ENCODE measurements at regions of chr10 and their contacts with region 1.

Region 1: GRCh38 chr10:117569610-117570390 is 27.3 kb downstream of the EMX2 start:
- DNase-seq: no peak
- ATAC-seq: no peak

Region 2: GRCh38 chr10:117454502-117454901 is 115.3 kb before region 1 on chr10:
- intact Hi-C with region 1: no loop called
- DNase-seq: no peak
- ATAC-seq: no peak

Region 3: DNA sequence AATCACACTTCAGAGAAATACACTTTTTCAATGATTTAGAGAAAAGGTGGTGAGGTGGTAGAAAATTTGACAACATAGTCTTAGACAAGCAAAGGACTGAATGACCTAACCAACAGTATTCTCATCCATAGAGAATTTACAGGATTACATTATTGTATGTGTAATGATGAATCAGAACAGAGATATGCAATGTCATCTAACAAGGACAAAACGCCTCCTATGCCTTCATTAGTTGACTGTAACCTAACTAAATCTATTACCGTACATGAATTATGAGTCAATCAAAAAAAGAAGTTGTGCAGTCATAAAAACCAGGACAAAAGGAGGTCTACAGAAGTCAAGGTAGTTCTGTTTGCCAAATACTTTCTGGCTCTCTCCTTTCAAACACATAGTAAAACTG is 410.4 kb after region 1 on chr10:
- intact Hi-C with region 1: no loop called
- DNase-seq: no peak
- ATAC-seq: no peak

Region 4: DNA sequence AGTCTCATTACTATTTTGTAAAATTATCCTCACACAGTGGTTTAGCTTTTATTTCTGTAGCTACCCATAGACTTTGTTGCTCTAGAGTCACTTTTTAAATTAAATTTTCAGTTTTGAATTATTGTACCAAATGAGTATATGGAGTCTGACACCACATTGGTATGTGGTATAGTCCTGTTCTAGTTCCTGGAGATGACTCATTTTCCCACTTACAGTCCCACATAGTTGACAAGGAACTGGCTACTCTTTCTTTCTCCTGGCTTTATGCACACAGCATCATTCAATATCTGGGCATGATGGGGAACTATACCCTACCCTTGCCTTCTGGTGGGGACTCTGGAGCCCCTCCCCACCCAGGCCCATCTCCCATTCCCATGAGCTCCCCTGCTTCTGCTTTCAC is 569.5 kb after region 1 on chr10:
- intact Hi-C with region 1: no loop called
- DNase-seq: no peak
- ATAC-seq: no peak

Region 5: DNA sequence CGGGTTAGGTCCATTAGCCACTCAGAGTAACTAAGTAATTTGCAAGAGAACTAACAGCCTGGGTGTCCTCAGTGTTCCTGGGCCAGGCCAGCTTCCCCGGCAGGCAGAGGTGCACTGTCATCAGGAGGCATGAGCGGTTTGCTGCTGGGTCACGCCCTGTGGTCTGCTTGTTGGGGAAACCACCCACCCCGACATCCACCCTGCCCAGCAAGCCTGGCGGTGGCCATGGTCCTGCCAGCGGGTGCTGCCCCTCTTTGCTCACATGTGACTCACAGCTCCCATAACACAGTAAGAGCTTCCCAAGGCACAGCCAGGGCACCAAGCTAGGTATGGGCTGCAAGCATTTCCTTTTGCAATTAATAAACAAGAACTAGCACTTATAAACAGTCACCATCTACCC is 1896.9 kb after region 1 on chr10:
- intact Hi-C with region 1: loop called in 1 of 2 experiments (anchors 10 kb)
- DNase-seq: no peak
- ATAC-seq: no peak